B cell (primary cell): ENCODE measurements at regions of chr3 and their contacts with region 1.

Region 1: DNA sequence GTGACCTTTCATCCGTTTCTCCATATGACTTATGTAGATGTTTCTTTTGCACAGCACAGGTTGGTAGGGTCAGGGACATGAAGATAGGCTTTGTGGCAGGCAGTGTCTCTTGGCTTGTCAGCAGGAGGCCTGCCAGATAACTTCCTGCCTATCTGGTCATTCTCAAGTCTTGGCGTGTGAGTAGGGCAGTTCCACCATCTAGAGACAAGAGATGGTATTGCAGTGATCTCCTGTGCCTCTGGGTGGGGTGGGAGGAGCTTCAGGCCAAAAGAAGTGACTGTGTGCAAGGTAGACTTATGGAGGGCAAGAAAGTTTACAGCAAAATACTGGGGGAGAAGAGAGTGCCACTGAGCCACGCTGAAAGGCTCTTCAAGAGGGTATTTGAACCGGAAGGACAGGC is 11.0 kb downstream of the TEX264 start:
- DNase-seq: peak; percentile 89
- ATAC-seq: peak; percentile 83
- H3K4me3 ChIP-seq: no peak overlapping the region
- H3K4me3 Mint-ChIP-seq: peak overlapping the region; percentile 5
- H3K27ac ChIP-seq: peak overlapping the region; percentile 33 to 69
- H3K27ac Mint-ChIP-seq: peak overlapping the region; percentile 54
- H3K4me1 ChIP-seq: peaks cover 63 to 87% of the 10 kb centered on the region in 2 donors
- H3K4me1 Mint-ChIP-seq: peaks cover 78% of the 10 kb centered on the region
- H3K27me3 ChIP-seq: no peaks in the 10 kb centered on the region
- H3K27me3 Mint-ChIP-seq: no peaks in the 10 kb centered on the region
- CTCF ChIP-seq: peak; percentile 90

Region 2: GRCh38 chr3:51391075-51391567 is 291.0 kb before region 1 on chr3 and contains the start of gene RBM15B:
- CTCF ChIA-PET with region 1: interaction called, 27 read pairs
- POLR2A ChIA-PET with region 1: no interaction called
- intact Hi-C with region 1: loop called (anchors 1 kb)
- DNase-seq: peak; percentile 97
- ATAC-seq: peak; percentile 95
- H3K4me3 ChIP-seq: peak within 1 kb of the TSS; percentile 11 to 66 (median 58)
- H3K4me3 Mint-ChIP-seq: peak within 1 kb of the TSS; percentile 84
- H3K27ac ChIP-seq: peak within 1 kb of the TSS; percentile 71 to 78
- H3K27ac Mint-ChIP-seq: peak within 1 kb of the TSS; percentile 88
- H3K4me1 ChIP-seq: peaks cover 24 to 41% of the 10 kb centered on the region in 2 donors
- H3K4me1 Mint-ChIP-seq: peaks cover 54% of the 10 kb centered on the region
- H3K27me3 ChIP-seq: no peaks in the 10 kb centered on the region
- H3K27me3 Mint-ChIP-seq: no peaks in the 10 kb centered on the region
- CTCF ChIP-seq: peak; percentile 87
- total RNA-seq, gene RBM15B: 29.5 and 30.5 TPM in 2 replicates

Region 3: DNA sequence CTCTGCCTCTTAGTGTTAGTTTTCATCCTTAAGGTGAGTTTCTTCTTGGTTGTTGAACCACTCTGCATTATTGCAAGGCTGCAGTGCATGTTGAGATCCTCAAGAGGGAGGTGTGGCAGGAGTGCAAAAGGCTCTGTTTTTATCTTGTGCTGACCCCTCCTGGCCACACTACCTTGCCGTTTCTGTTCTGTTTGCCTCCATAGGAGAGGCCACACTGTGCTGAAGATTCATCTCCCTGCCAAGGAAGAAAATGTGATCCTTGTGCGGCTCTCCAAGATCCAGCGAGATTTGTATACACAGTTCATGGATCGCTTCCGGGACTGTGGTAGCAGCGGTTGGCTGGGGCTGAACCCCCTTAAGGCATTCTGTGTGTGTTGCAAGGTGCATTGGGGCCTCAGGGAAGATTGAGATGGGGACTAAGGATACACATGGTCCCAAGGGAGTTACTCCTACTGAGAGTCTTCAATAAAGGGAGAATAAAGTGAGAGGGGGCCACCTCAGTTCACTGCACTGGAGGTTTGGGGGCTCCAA is 44.1 kb before region 1 on chr3:
- CTCF ChIA-PET with region 1: interaction called, 74 read pairs
- POLR2A ChIA-PET with region 1: no interaction called
- intact Hi-C with region 1: loop called (anchors 1 kb)
- DNase-seq: peak; percentile 41
- ATAC-seq: peak; percentile 79
- H3K4me3 ChIP-seq: no peak overlapping the region
- H3K4me3 Mint-ChIP-seq: no peak overlapping the region
- H3K27ac ChIP-seq: no peak overlapping the region
- H3K27ac Mint-ChIP-seq: no peak overlapping the region
- H3K4me1 ChIP-seq: no peaks in the 10 kb centered on the region
- H3K4me1 Mint-ChIP-seq: no peaks in the 10 kb centered on the region
- H3K27me3 ChIP-seq: no peaks in the 10 kb centered on the region
- H3K27me3 Mint-ChIP-seq: no peaks in the 10 kb centered on the region
- CTCF ChIP-seq: peak; percentile 62

Region 4: GRCh38 chr3:51670823-51671733 is 11.0 kb before region 1 on chr3 and contains the start of gene TEX264:
- CTCF ChIA-PET with region 1: interaction called, 167 read pairs
- POLR2A ChIA-PET with region 1: interaction called, 7 read pairs
- intact Hi-C with region 1: loop called (anchors 1 kb)
- DNase-seq: peak; percentile 97
- ATAC-seq: peak; percentile 85
- H3K4me3 ChIP-seq: peak within 1 kb of the TSS; percentile 46 to 99 (median 96)
- H3K4me3 Mint-ChIP-seq: peak within 1 kb of the TSS; percentile 91
- H3K27ac ChIP-seq: peak within 1 kb of the TSS; percentile 81 to 85
- H3K27ac Mint-ChIP-seq: peak within 1 kb of the TSS; percentile 92
- H3K4me1 ChIP-seq: peaks cover 25 to 55% of the 10 kb centered on the region in 2 donors
- H3K4me1 Mint-ChIP-seq: peaks cover 61% of the 10 kb centered on the region
- H3K27me3 ChIP-seq: no peaks in the 10 kb centered on the region
- H3K27me3 Mint-ChIP-seq: no peaks in the 10 kb centered on the region
- CTCF ChIP-seq: no peak
- total RNA-seq, gene TEX264: 31.8 and 39.1 TPM in 2 replicates